Right cardiac atrium (tissue), 5 donors: ENCODE measurements at regions of chr5 and their contacts with region 1.

Region 1: GRCh38 chr5:148374692-148375360 is 8.9 kb upstream of the FBXO38 start:
- DNase-seq: peak in 1 of 3 donors; percentile 21
- ATAC-seq: peak; percentile 75 to 87
- H3K4me3 ChIP-seq: no peak overlapping the region
- H3K27ac ChIP-seq: no peak overlapping the region
- H3K4me1 ChIP-seq: no peaks in the 10 kb centered on the region
- H3K27me3 ChIP-seq: no peaks in the 10 kb centered on the region

Region 2: DNA sequence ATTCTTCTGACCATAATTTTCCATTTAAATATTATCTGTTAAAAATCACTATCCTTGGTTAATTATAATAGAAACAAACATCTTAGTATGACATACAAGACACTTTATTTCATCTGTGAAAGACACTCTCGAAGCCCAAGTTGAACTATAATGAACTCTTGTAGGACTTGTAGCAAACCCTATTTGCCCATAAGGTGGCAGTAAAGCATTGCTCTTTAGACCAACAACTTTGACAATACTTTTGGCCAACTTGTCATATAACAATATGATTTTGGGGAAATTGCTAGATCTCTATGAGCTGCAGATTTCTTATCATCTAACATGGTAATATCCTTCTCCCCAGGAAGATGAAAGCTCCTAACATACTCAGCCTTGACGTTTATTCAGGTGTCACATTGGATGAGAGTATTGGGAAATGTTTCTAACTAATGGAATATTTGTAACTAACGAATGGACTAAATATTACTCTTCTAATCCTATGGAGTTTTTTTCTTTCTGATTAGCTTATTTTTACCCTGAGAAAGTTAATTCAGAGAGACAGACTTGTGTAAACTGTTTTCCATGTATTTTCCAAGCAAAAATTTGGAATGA is 195.5 kb before region 1 on chr5:
- intact Hi-C with region 1: loop called in 2 of 4 experiments (anchors 10 kb)
- DNase-seq: no peak
- ATAC-seq: peak; percentile 62 to 74
- H3K4me3 ChIP-seq: no peak overlapping the region
- H3K27ac ChIP-seq: no peak overlapping the region
- H3K4me1 ChIP-seq: no peaks in the 10 kb centered on the region
- H3K27me3 ChIP-seq: no peaks in the 10 kb centered on the region

Region 3: GRCh38 chr5:148201151-148201550 is 173.7 kb before region 1 on chr5:
- intact Hi-C with region 1: no loop called
- DNase-seq: no peak
- ATAC-seq: no peak
- H3K4me3 ChIP-seq: no peak overlapping the region
- H3K27ac ChIP-seq: no peak overlapping the region
- H3K4me1 ChIP-seq: no peaks in the 10 kb centered on the region
- H3K27me3 ChIP-seq: no peaks in the 10 kb centered on the region

Region 4: DNA sequence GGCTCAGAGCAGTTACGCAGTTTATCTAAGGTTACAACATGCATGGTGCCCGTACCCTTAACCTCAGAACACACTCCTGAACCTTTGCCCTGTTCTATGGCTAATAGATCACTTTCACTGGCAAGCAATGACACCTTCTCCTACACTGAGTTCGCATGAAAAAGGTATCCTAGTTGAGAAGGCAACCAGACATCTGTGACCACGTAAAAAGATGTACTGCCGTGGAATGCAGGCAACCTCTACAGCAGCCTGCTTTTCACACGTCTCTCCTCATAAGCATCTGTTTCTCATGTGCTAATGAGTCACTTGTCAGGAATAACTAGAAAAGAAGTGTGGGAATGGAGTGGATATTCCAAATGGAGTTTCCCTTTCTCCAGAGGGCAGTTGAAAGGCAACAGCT is 80.4 kb after region 1 on chr5:
- intact Hi-C with region 1: no loop called
- DNase-seq: no peak
- ATAC-seq: peak; percentile 43 to 65
- H3K4me3 ChIP-seq: no peak overlapping the region
- H3K27ac ChIP-seq: peak overlapping the region; percentile 97
- H3K4me1 ChIP-seq: no peaks in the 10 kb centered on the region
- H3K27me3 ChIP-seq: no peaks in the 10 kb centered on the region